MCF 10A (cell line): ENCODE measurements at regions of chr13 and their contacts with region 1.

Region 1: DNA sequence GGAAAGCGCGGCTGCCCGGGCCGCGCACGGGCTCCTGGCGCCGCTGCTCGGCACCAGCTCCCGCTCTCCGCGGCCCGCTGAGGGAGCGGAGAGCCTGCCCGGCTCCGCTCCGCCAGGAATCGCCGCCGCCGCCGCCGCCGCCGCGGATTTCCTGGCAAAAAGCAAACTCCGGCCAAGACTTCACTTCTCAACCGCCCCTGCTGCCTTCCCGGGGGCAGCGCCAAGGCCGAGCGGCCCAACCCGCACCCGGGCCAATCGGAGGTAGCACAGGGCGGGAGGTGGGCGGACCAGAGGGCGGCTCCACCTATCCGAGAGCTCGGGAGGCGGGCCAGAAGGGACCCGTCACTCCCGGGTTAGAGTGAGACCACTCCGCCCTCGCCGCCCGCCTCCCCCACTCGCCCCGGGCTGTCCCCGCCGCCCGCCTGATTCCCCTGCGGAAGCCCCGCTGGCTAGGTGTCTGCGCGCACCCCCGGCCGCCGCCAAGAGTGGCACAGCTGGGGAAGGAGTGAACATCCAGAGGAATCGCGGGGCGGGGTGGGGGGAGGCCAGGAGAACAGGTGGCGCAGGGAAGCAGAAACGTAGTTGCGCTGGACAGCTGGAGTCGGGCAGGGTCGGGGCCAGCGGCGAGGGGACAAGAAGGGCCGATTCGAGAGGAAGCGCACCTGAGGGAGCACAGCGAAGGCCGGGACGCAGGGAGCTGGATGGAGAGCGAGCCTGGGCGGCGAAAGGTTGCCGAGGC is at the start of gene LNX2:
- DNase-seq: peak; percentile 97
- H3K4me3 Mint-ChIP-seq: peak within 1 kb of the TSS; percentile 93
- H3K27ac Mint-ChIP-seq: peak within 1 kb of the TSS; percentile 74
- H3K4me1 Mint-ChIP-seq: peaks cover 45% of the 10 kb centered on the region
- H3K27me3 Mint-ChIP-seq: no peaks in the 10 kb centered on the region
- CTCF ChIP-seq: no peak
- total RNA-seq, gene LNX2: 12.3 and 15.6 TPM in 2 replicates

Region 2: GRCh38 chr13:27424246-27425157 is 196.0 kb before region 1 on chr13 and contains the start of gene GTF3A:
- CTCF ChIA-PET with region 1: no interaction called
- POLR2A ChIA-PET with region 1: interaction called, 91 read pairs
- intact Hi-C with region 1: no loop called
- DNase-seq: peak; percentile 84
- H3K4me3 Mint-ChIP-seq: peak within 1 kb of the TSS; percentile 75
- H3K27ac Mint-ChIP-seq: peak within 1 kb of the TSS; percentile 57
- H3K4me1 Mint-ChIP-seq: peaks cover 29% of the 10 kb centered on the region
- H3K27me3 Mint-ChIP-seq: no peaks in the 10 kb centered on the region
- CTCF ChIP-seq: no peak
- total RNA-seq, gene GTF3A: 124 and 159 TPM in 2 replicates

Region 3: GRCh38 chr13:27455331-27455855 is 165.2 kb before region 1 on chr13:
- CTCF ChIA-PET with region 1: no interaction called
- POLR2A ChIA-PET with region 1: interaction called, 158 read pairs
- intact Hi-C with region 1: loop called (anchors 2 kb)
- DNase-seq: no peak
- H3K4me3 Mint-ChIP-seq: peak overlapping the region; percentile 28
- H3K27ac Mint-ChIP-seq: peak overlapping the region; percentile 63
- H3K4me1 Mint-ChIP-seq: peaks cover 8% of the 10 kb centered on the region
- H3K27me3 Mint-ChIP-seq: no peaks in the 10 kb centered on the region
- CTCF ChIP-seq: no peak

Region 4: DNA sequence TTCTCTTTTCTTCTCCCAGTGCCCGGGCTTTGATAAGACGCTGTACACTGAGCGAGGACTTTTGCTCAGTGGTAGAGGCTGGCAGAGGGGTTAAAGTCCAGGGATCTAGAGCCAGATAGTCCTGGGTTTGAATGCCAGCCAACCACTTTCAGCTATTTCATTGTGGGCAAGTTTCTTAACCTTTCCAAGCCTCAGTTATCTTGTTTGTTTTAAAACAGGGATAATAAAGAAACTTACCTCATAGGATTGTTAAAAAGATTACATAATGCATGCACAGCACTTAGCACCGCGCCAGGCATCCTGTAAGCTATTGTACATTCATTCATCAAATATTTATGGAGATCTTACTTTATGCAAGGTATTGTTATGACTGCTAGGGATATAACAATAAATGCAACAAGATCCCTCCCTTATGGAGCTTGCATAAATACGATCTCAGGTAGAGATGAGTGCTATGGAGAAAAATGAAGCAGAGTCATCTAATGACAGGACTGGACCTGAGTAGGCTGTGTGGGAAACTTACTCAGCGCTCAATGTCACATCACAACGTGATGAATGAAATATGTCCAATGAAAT is 71.1 kb before region 1 on chr13:
- CTCF ChIA-PET with region 1: interaction called, 4 read pairs
- POLR2A ChIA-PET with region 1: interaction called, 43 read pairs
- intact Hi-C with region 1: no loop called
- DNase-seq: peak; percentile 73
- H3K4me3 Mint-ChIP-seq: no peak overlapping the region
- H3K27ac Mint-ChIP-seq: no peak overlapping the region
- H3K4me1 Mint-ChIP-seq: peaks cover 8% of the 10 kb centered on the region
- H3K27me3 Mint-ChIP-seq: no peaks in the 10 kb centered on the region
- CTCF ChIP-seq: no peak

Region 5: DNA sequence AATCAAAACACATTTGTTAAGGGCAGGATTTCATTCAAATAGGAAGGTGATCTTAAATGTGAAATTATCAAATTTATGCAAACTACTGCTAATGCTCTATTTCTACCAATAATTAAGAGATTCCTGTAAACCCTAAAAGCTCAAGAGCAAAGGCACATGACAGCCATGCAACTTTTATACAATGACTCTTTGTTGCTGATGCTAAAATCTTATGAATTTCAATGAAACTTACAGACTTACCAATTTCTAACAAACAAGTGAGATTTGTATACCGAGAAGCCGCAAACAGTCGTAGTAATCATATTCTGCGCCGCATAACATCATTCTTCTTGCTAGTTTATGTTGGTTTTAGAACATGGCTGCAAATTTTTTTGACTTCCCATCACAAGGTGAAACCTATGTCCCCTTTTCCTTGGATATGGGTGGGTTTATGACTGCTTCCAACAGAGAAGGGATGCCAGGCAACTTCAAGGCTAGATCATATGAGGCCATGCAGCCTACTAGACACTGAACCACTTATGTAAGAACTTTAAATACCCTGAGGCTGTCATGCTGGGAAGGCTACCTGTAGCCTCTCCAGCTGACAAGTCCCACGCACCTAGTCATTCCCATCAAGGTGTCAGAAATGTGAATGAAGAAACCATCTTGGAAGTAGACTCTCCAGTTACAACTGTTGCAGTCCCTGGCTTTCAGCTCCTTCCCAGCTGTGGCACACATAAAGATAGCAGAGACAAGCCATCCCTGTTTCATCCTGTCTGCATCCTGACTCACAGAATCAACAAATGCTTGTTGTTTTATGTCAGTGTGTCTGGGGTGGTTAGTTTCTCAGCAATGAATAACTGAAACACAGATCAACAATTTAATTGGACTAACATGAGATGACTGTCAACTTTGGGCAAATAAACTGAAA is 42.2 kb before region 1 on chr13:
- CTCF ChIA-PET with region 1: interaction called, 3 read pairs
- POLR2A ChIA-PET with region 1: interaction called, 11 read pairs
- intact Hi-C with region 1: loop called (anchors 1 kb)
- DNase-seq: peak; percentile 53
- H3K4me3 Mint-ChIP-seq: no peak overlapping the region
- H3K27ac Mint-ChIP-seq: peak overlapping the region; percentile 69
- H3K4me1 Mint-ChIP-seq: peaks cover 10% of the 10 kb centered on the region
- H3K27me3 Mint-ChIP-seq: no peaks in the 10 kb centered on the region
- CTCF ChIP-seq: no peak

Region 6: DNA sequence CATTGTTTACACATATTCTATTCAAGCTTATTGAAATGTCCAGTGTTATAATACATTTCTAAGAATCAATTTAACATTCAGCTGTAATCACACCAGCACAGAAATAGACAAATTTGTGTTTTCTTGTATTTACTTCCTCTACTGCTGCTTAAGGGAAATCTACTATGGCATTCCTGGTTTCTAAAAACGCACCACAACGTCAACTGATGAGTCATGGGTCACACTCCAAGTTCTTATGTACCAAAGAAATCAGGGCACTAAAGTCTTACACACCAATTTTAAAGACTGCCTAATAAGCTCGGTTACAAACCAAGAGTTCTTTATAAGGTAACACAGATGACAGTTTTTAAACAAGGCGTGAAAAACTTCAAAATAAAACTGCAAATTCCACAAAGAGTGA is 13.4 kb before region 1 on chr13:
- CTCF ChIA-PET with region 1: interaction called, 6 read pairs
- POLR2A ChIA-PET with region 1: interaction called, 226 read pairs
- intact Hi-C with region 1: no loop called
- DNase-seq: peak; percentile 65
- H3K4me3 Mint-ChIP-seq: peak overlapping the region; percentile 22
- H3K27ac Mint-ChIP-seq: peak overlapping the region; percentile 78
- H3K4me1 Mint-ChIP-seq: peaks cover 19% of the 10 kb centered on the region
- H3K27me3 Mint-ChIP-seq: no peaks in the 10 kb centered on the region
- CTCF ChIP-seq: no peak

Region 7: GRCh38 chr13:27678306-27679040 is 57.9 kb after region 1 on chr13:
- CTCF ChIA-PET with region 1: no interaction called
- POLR2A ChIA-PET with region 1: interaction called, 26 read pairs
- intact Hi-C with region 1: no loop called
- DNase-seq: peak; percentile 65
- H3K4me3 Mint-ChIP-seq: no peak overlapping the region
- H3K27ac Mint-ChIP-seq: peak overlapping the region; percentile 24
- H3K4me1 Mint-ChIP-seq: peaks cover 15% of the 10 kb centered on the region
- H3K27me3 Mint-ChIP-seq: no peaks in the 10 kb centered on the region
- CTCF ChIP-seq: no peak

Region 8: DNA sequence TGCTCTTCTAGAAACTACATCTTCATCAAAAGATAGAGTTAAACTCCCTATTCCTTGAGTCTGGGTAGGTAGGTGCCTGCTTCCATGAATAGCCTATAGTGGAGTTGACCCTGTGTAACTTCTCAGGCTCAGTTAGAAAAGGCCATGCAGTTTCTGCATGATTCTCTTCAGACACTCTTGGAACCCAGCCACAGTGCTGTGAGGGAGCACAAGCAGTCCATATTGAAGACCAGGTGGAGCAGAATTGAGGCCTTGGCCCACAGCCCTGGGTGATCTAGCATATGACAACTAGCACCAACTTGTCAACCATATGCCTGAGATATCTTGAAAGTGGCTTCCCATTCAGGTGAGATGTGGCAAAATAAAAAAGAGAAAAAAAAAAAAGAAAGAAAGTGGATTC is 507.5 kb after region 1 on chr13:
- CTCF ChIA-PET with region 1: no interaction called
- POLR2A ChIA-PET with region 1: no interaction called
- intact Hi-C with region 1: no loop called
- DNase-seq: no peak
- H3K4me3 Mint-ChIP-seq: no peak overlapping the region
- H3K27ac Mint-ChIP-seq: no peak overlapping the region
- H3K4me1 Mint-ChIP-seq: no peaks in the 10 kb centered on the region
- H3K27me3 Mint-ChIP-seq: no peaks in the 10 kb centered on the region
- CTCF ChIP-seq: no peak